Activated T-helper 1 cell treated with anti-CD3 and anti-CD28 coated beads, Interleukin-12 subunit alpha, Interleukin-12 subunit beta, Interleukin-2, Interleukin-4 antibody, amounts not matched to agents 30 ng/mL and 10 ng/mL and 1 ng/mL, durations not matched to agents 14 hours and 24 hours and 36 hours (primary cell): ENCODE measurements at regions of chr16 and their contacts with region 1.

Region 1: DNA sequence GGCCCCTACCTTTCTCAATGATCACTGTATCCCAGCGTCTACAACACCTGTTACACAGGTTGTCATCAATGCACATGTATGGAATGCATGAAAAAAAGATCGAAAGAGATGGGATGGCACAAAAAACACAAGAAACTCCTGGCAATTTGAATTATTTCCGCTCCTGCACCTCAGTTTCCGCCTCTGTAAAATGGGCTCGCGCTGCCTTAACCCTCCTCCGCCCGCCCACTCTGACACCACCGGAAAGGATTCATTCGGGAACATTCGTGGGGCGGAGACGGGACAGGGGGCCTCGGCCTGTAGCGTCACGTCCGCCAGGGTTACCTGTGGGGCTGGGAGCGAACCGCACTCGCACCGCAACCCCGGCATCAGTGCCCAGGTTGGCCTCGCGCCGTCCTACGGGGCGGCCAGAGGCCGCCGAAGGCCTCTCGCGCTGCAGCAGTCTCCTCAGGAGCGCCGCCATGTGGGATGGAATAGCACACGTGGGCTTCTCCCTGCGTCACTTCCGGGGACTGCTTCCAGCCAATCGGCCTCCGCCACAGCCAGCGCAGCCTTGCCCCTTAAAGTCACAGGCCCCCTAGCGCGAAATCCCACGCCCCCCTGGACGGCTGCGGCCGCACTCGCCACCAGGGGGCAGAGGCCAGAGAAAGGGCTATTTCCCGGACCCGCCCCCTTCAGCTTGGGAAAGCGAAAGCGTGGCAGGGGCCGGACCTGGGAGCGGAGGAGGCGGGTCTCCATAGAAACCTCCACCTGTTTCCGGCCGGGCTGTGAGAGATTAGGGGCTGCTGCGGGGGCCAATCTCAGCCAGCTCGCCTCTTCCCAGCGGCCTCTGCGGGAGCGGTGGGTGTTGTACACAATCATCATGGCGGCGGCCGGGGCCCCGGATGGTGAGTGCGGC is at the starts of genes EARS2 and UBFD1:
- DNase-seq: peak; percentile 96
- H3K4me3 Mint-ChIP-seq: peak within 1 kb of the TSS; percentile 95
- H3K27ac Mint-ChIP-seq: peak within 1 kb of the TSS; percentile 92
- H3K4me1 Mint-ChIP-seq: peaks cover 44% of the 10 kb centered on the region
- H3K27me3 Mint-ChIP-seq: peaks cover 4% of the 10 kb centered on the region
- total RNA-seq, gene EARS2: 27.8 and 29.9 TPM in 2 replicates
- total RNA-seq, gene UBFD1: 54.9 and 55.0 TPM in 2 replicates

Region 2: GRCh38 chr16:21599233-21600030 is 1957.7 kb before region 1 on chr16 and contains the start of gene METTL9:
- intact Hi-C with region 1: loop called (anchors 5 kb)
- DNase-seq: peak; percentile 95
- H3K4me3 Mint-ChIP-seq: peak within 1 kb of the TSS; percentile 96
- H3K27ac Mint-ChIP-seq: peak within 1 kb of the TSS; percentile 87
- H3K4me1 Mint-ChIP-seq: peaks cover 55% of the 10 kb centered on the region
- H3K27me3 Mint-ChIP-seq: peaks cover 3% of the 10 kb centered on the region
- total RNA-seq, gene METTL9: 58.8 and 64.9 TPM in 2 replicates

Region 3: GRCh38 chr16:23149349-23149996 is 407.7 kb before region 1 on chr16 and contains the start of gene USP31:
- intact Hi-C with region 1: loop called (anchors 2 kb)
- DNase-seq: peak; percentile 89
- H3K4me3 Mint-ChIP-seq: peak within 1 kb of the TSS; percentile 96
- H3K27ac Mint-ChIP-seq: peak within 1 kb of the TSS; percentile 96
- H3K4me1 Mint-ChIP-seq: peaks cover 31% of the 10 kb centered on the region
- H3K27me3 Mint-ChIP-seq: peaks cover 11% of the 10 kb centered on the region
- total RNA-seq, gene USP31: 11.3 and 11.6 TPM in 2 replicates

Region 4: DNA sequence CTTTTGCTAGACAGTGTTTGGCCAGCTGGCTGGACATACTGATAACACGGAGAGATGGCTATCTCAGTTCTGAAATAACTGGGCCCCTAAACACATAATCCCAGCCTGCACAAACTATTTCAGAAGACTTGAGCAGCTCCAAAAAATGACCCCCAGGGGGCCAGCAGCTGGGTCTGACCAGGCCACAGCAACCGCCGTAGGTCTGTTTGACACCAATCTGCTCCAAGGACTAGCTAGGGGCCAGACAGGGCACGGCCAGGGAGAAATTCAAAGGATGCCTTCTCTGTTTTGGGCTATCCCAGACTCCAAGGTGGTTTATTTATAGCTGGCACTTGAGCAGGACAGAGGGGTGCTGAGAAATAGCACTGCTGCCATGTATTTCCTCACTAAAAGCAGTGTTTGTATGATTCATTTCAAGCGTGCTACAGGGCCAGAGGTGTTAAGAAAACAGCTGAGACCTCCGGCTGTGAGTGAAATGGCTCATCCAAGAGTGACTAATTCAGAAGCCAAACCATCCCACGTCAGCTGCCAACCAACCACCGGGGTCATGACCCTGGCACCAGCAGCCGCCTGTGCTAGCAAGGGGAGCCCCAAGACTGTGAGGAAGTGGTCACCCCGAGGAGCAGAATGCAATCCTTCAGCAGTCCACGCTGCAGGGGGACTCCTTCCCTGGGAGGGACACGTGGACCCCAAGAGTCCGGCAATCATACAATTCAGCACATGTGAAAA is 52.5 kb before region 1 on chr16:
- intact Hi-C with region 1: loop called (anchors 1 kb)
- DNase-seq: peak; percentile 68
- H3K4me3 Mint-ChIP-seq: peak overlapping the region; percentile 46
- H3K27ac Mint-ChIP-seq: peak overlapping the region; percentile 79
- H3K4me1 Mint-ChIP-seq: peaks cover 72% of the 10 kb centered on the region
- H3K27me3 Mint-ChIP-seq: no peaks in the 10 kb centered on the region

Region 5: GRCh38 chr16:23518435-23518891 is 38.7 kb before region 1 on chr16:
- intact Hi-C with region 1: no loop called
- DNase-seq: no peak
- H3K4me3 Mint-ChIP-seq: no peak overlapping the region
- H3K27ac Mint-ChIP-seq: no peak overlapping the region
- H3K4me1 Mint-ChIP-seq: peaks cover 29% of the 10 kb centered on the region
- H3K27me3 Mint-ChIP-seq: no peaks in the 10 kb centered on the region

Region 6: DNA sequence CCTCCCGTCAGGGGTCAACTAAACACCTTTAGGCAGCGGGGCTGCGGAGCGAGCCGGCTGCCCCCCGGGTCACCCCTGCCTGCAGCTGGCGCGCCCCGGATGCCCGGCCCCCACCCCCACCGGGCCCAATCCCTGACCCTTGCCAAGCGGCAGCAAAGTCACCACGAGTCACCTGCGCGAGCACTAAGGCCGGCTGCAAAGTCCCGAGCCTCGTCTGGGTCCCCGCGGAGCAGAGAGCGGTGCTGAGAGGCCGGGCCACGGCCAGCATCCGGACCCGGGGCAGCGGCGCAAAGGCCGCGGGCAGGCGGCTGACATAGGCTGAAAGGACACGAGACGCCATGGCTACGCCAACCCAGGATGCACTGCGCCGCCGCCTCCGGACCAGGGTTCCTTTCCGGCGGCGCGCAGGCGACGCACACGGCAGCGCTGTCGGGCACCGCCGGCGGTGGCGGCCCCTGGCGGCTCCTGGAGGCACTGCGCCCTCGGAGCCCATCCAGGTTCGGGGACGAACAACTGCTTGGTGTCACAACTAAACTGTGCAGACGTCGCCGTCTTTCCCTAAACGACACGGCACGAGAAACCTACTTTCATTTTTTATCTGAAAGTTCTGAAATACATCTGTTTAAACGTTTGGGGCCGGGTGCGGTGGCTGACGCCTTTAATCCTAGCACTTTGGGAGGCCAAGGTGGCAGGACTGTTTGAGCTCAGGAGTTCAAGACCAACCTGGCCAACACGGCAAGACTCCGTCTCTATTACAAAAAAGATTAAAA is 39.0 kb after region 1 on chr16 and contains the start of gene NDUFAB1:
- intact Hi-C with region 1: loop called (anchors 1 kb)
- DNase-seq: peak; percentile 90
- H3K4me3 Mint-ChIP-seq: peak within 1 kb of the TSS; percentile 88
- H3K27ac Mint-ChIP-seq: peak within 1 kb of the TSS; percentile 80
- H3K4me1 Mint-ChIP-seq: peaks cover 30% of the 10 kb centered on the region
- H3K27me3 Mint-ChIP-seq: no peaks in the 10 kb centered on the region
- total RNA-seq, gene NDUFAB1: 146 and 148 TPM in 2 replicates

Region 7: DNA sequence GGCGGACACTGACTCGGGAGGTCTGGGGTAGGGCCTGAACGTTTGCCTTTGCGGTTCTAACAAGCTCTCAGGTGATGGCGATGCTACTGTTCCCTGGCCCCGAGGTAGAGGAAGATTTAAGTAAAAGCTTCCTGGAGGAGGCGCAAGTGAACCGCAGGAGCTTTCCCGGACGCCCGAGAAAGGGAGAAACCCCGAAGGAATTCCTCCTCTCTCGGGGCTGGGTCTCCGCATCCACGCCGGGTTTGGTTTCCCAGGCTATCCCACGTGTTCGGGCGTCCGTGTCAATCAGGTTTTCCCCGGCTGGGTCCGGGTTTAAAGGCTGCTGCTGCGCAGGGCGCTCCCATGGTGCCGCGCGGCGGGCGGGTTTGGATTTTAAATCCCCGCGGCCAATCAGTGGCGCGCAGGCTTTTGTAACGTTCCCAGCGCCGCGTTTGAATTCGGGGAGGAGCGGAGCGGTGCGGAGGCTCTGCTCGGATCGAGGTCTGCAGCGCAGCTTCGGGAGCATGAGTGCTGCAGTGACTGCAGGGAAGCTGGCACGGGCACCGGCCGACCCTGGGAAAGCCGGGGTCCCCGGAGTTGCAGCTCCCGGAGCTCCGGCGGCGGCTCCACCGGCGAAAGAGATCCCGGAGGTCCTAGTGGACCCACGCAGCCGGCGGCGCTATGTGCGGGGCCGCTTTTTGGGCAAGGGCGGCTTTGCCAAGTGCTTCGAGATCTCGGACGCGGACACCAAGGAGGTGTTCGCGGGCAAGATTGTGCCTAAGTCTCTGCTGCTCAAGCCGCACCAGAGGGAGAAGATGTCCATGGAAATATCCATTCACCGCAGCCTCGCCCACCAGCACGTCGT is 121.5 kb after region 1 on chr16 and contains the start of gene PLK1:
- intact Hi-C with region 1: loop called (anchors 1 kb)
- DNase-seq: peak; percentile 81
- H3K4me3 Mint-ChIP-seq: peak within 1 kb of the TSS; percentile 94
- H3K27ac Mint-ChIP-seq: peak within 1 kb of the TSS; percentile 84
- H3K4me1 Mint-ChIP-seq: peaks cover 34% of the 10 kb centered on the region
- H3K27me3 Mint-ChIP-seq: no peaks in the 10 kb centered on the region
- total RNA-seq, gene PLK1: 45.2 and 54.7 TPM in 2 replicates

Region 8: GRCh38 chr16:23694644-23695373 is 137.7 kb after region 1 on chr16:
- intact Hi-C with region 1: no loop called
- DNase-seq: no peak
- H3K4me3 Mint-ChIP-seq: peak overlapping the region; percentile 24
- H3K27ac Mint-ChIP-seq: no peak overlapping the region
- H3K4me1 Mint-ChIP-seq: no peaks in the 10 kb centered on the region
- H3K27me3 Mint-ChIP-seq: no peaks in the 10 kb centered on the region

Region 9: GRCh38 chr16:25257504-25257955 is 1700.4 kb after region 1 on chr16 and contains the start of gene ZKSCAN2:
- intact Hi-C with region 1: loop called (anchors 5 kb)
- DNase-seq: peak; percentile 83
- H3K4me3 Mint-ChIP-seq: peak within 1 kb of the TSS; percentile 91
- H3K27ac Mint-ChIP-seq: peak within 1 kb of the TSS; percentile 97
- H3K4me1 Mint-ChIP-seq: peaks cover 53% of the 10 kb centered on the region
- H3K27me3 Mint-ChIP-seq: peaks cover 2% of the 10 kb centered on the region
- total RNA-seq, gene ZKSCAN2: 6.1 and 6.4 TPM in 2 replicates